CD4-positive, alpha-beta T cell (primary cell): ENCODE measurements at regions of chr15 and their contacts with region 1.

Region 1: GRCh38 chr15:66356345-66357236 is at the start of gene TIPIN:
- DNase-seq: peak; percentile 94 to 99 (median 96)
- ATAC-seq: peak; percentile 96
- H3K4me3 ChIP-seq: peak within 1 kb of the TSS; percentile 74
- H3K4me3 Mint-ChIP-seq: peak within 1 kb of the TSS; percentile 89
- H3K27ac ChIP-seq: peak within 1 kb of the TSS; percentile 24 to 56
- H3K27ac Mint-ChIP-seq: peak within 1 kb of the TSS; percentile 81
- H3K4me1 ChIP-seq: peaks cover 20% of the 10 kb centered on the region
- H3K4me1 Mint-ChIP-seq: peaks cover 23% of the 10 kb centered on the region
- H3K27me3 ChIP-seq: no peaks in the 10 kb centered on the region
- H3K27me3 Mint-ChIP-seq: no peaks in the 10 kb centered on the region
- CTCF ChIP-seq: no peak
- total RNA-seq, gene TIPIN: 3.7 to 3.9 TPM

Region 2: GRCh38 chr15:66072616-66073361 is 283.8 kb before region 1 on chr15:
- CTCF ChIA-PET with region 1: no interaction called
- POLR2A ChIA-PET with region 1: no interaction called
- intact Hi-C with region 1: no loop called
- DNase-seq: no peak
- ATAC-seq: no peak
- H3K4me3 ChIP-seq: no peak overlapping the region
- H3K4me3 Mint-ChIP-seq: no peak overlapping the region
- H3K27ac ChIP-seq: no peak overlapping the region
- H3K27ac Mint-ChIP-seq: no peak overlapping the region
- H3K4me1 ChIP-seq: no peaks in the 10 kb centered on the region
- H3K4me1 Mint-ChIP-seq: no peaks in the 10 kb centered on the region
- H3K27me3 ChIP-seq: no peaks in the 10 kb centered on the region
- H3K27me3 Mint-ChIP-seq: peaks cover 21% of the 10 kb centered on the region
- CTCF ChIP-seq: no peak

Region 3: DNA sequence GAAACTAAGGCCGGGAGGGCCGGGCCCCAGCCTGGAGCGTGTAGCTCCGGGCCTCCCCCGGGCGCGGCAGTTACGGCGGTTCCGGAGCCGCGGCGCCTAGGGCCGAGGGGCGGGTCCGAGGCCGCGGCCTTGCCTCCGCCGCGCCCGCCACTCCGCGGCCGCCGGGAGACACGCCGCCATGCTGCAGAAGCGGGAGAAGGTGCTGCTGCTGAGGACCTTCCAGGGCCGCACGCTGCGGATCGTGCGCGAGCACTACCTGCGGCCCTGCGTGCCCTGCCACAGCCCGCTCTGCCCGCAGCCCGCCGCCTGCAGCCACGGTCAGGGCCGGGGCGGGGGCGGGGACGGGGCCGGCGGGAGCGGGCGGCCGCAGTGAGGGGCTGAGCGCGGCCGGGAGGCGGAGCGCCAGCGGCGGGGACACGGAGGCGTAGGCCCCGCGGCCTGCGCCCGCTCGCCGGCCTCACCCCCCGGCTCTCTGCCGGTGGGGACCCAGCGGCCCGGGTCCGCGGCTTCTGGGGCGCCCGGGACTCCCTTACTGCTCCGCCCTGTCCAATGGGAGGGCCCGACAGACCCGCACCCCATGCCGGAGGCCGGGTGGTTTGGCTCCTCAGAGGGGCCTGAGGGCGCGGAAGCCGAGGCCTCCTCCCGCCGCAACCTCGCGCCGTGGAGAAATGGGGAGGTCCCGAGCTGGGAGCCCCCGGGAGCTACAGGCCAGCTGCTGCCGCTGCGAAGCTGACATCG is 63.0 kb before region 1 on chr15 and contains the start of gene DIS3L:
- CTCF ChIA-PET with region 1: no interaction called
- POLR2A ChIA-PET with region 1: interaction called, 3 read pairs
- intact Hi-C with region 1: loop called in 1 of 2 experiments (anchors 5 kb)
- DNase-seq: peak; percentile 36 to 86 (median 58)
- ATAC-seq: peak; percentile 72
- H3K4me3 ChIP-seq: peak within 1 kb of the TSS; percentile 75
- H3K4me3 Mint-ChIP-seq: peak within 1 kb of the TSS; percentile 92
- H3K27ac ChIP-seq: peak within 1 kb of the TSS; percentile 80 to 93
- H3K27ac Mint-ChIP-seq: peak within 1 kb of the TSS; percentile 97
- H3K4me1 ChIP-seq: peaks cover 33% of the 10 kb centered on the region
- H3K4me1 Mint-ChIP-seq: peaks cover 49% of the 10 kb centered on the region
- H3K27me3 ChIP-seq: no peaks in the 10 kb centered on the region
- H3K27me3 Mint-ChIP-seq: no peaks in the 10 kb centered on the region
- CTCF ChIP-seq: no peak
- total RNA-seq, gene DIS3L: 22.6 to 24.3 TPM

Region 4: GRCh38 chr15:66401130-66402021 is 44.8 kb after region 1 on chr15:
- CTCF ChIA-PET with region 1: no interaction called
- POLR2A ChIA-PET with region 1: no interaction called
- intact Hi-C with region 1: loop called in 1 of 2 experiments (anchors 5 kb)
- DNase-seq: peak in 4 of 14 experiments; percentile 27 to 42 (median 32)
- ATAC-seq: peak; percentile 71
- H3K4me3 ChIP-seq: peak overlapping the region; percentile 8
- H3K4me3 Mint-ChIP-seq: peak overlapping the region; percentile 79
- H3K27ac ChIP-seq: no peak overlapping the region
- H3K27ac Mint-ChIP-seq: peak overlapping the region; percentile 79
- H3K4me1 ChIP-seq: peaks cover 49% of the 10 kb centered on the region
- H3K4me1 Mint-ChIP-seq: peaks cover 79% of the 10 kb centered on the region
- H3K27me3 ChIP-seq: no peaks in the 10 kb centered on the region
- H3K27me3 Mint-ChIP-seq: no peaks in the 10 kb centered on the region
- CTCF ChIP-seq: no peak

Region 5: GRCh38 chr15:66700802-66701421 is 344.3 kb after region 1 on chr15:
- CTCF ChIA-PET with region 1: no interaction called
- POLR2A ChIA-PET with region 1: no interaction called
- intact Hi-C with region 1: loop called in 1 of 2 experiments (anchors 2 kb)
- DNase-seq: peak; percentile 64 to 91 (median 82)
- ATAC-seq: peak; percentile 76
- H3K4me3 ChIP-seq: peak overlapping the region; percentile 76
- H3K4me3 Mint-ChIP-seq: peak overlapping the region; percentile 90
- H3K27ac ChIP-seq: no peak overlapping the region
- H3K27ac Mint-ChIP-seq: peak overlapping the region; percentile 73
- H3K4me1 ChIP-seq: peaks cover 30% of the 10 kb centered on the region
- H3K4me1 Mint-ChIP-seq: peaks cover 23% of the 10 kb centered on the region
- H3K27me3 ChIP-seq: peaks cover 17 to 20% of the 10 kb centered on the region in 2 experiments
- H3K27me3 Mint-ChIP-seq: peaks cover 30% of the 10 kb centered on the region
- CTCF ChIP-seq: no peak